Activated CD8-positive, alpha-beta memory T cell treated with anti-CD3 and anti-CD28 coated beads, Interleukin-2, amount 10 ng/mL, durations not matched to agents 7 days and 5 days (primary cell): ENCODE measurements at regions of chr1 and their contacts with region 1.

Region 1: GRCh38 chr1:66331657-66332547 is 202.1 kb upstream of the SGIP1 start:
- DNase-seq: peak; percentile 79
- ATAC-seq: peak; percentile 34
- H3K4me3 Mint-ChIP-seq: peak overlapping the region; percentile 85
- H3K27ac Mint-ChIP-seq: peak overlapping the region; percentile 96
- H3K4me1 Mint-ChIP-seq: peaks cover 53% of the 10 kb centered on the region
- H3K27me3 Mint-ChIP-seq: no peaks in the 10 kb centered on the region

Region 2: GRCh38 chr1:65799601-65800000 is 532.3 kb before region 1 on chr1:
- CTCF ChIA-PET with region 1: no interaction called
- DNase-seq: no peak
- ATAC-seq: no peak
- H3K4me3 Mint-ChIP-seq: no peak overlapping the region
- H3K27ac Mint-ChIP-seq: no peak overlapping the region
- H3K4me1 Mint-ChIP-seq: no peaks in the 10 kb centered on the region
- H3K27me3 Mint-ChIP-seq: peaks cover 75% of the 10 kb centered on the region

Region 3: DNA sequence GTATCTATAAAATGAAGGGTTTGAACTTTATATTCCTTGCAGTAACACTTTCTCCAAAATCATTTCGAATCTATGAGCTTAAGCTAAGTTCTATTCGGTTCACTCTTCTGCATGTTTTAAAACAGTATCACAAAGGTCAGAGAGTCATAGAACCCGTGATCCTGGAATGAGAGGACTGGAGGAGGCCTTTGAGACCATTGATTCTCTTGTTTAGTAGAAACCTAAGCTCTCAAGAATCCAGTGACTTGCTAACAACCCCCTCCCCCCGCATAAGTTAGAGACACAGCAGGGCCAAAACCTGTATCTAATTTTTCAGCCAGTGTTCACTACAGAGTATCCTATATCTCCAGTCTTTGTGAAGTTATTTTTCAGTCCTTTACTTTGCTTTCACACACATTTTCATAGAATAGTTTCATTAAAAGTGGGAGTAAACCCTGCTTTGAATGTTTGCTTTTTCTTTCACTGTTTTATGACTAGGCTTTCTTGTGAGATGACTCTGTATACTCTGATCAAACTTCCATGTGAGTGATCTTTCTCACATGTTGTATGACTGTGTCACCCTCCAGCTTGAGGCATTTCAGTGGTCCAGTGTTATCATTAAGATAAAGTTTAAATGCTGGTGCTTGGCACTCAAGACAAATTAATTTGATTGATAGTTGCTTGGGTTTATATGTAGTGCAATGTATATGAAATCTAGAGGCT is 73.3 kb before region 1 on chr1:
- CTCF ChIA-PET with region 1: interaction called, 15 read pairs
- DNase-seq: no peak
- ATAC-seq: peak; percentile 88
- H3K4me3 Mint-ChIP-seq: no peak overlapping the region
- H3K27ac Mint-ChIP-seq: peak overlapping the region; percentile 44
- H3K4me1 Mint-ChIP-seq: peaks cover 84% of the 10 kb centered on the region
- H3K27me3 Mint-ChIP-seq: no peaks in the 10 kb centered on the region

Region 4: DNA sequence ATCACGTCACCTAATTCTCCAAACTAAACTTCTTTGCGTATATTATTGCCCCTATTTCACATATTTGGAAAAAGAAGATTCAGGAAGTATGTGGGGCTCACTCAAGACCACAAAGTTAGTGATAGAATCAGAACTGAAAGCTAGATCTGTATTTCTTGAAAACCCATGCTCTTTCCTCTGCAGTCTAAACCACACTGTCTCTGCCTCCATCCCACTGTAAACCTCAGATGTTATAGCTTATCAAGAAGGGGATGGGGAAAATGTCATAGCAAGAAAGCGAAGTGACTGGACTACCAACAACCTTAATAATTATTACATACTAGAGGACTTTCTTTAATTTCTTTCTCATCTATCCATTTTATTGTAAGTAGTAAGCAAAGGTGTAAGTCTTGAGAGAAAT is 55.7 kb before region 1 on chr1:
- CTCF ChIA-PET with region 1: interaction called, 41 read pairs
- DNase-seq: peak; percentile 77
- ATAC-seq: peak; percentile 81
- H3K4me3 Mint-ChIP-seq: peak overlapping the region; percentile 52
- H3K27ac Mint-ChIP-seq: peak overlapping the region; percentile 79
- H3K4me1 Mint-ChIP-seq: peaks cover 93% of the 10 kb centered on the region
- H3K27me3 Mint-ChIP-seq: no peaks in the 10 kb centered on the region

Region 5: GRCh38 chr1:66282343-66282852 is 49.5 kb before region 1 on chr1:
- CTCF ChIA-PET with region 1: interaction called, 41 read pairs
- DNase-seq: peak; percentile 81
- ATAC-seq: peak; percentile 89
- H3K4me3 Mint-ChIP-seq: no peak overlapping the region
- H3K27ac Mint-ChIP-seq: peak overlapping the region; percentile 70
- H3K4me1 Mint-ChIP-seq: peaks cover 95% of the 10 kb centered on the region
- H3K27me3 Mint-ChIP-seq: no peaks in the 10 kb centered on the region

Region 6: DNA sequence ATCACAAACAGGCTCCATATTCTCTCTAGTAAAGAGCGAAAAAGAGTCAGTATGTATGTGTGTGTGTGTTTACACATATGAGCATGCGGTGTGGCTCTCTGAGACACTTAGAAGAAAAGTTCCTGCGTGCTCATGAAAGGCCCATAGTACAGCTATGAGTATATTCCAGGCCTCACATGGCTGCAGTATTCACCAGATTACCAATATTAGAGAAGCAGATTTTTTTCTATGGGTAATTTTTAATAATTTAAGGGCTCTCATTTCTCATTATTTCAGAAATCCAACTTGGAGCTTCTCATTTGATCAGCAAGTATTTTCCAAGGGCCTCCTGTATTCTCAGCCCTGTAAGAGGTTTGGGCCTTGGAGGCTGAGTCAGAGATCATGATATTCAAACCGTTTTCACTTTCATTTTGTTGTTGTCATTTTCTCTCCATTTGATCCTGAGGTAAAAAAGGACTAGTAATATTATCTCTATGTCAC is 30.9 kb before region 1 on chr1:
- CTCF ChIA-PET with region 1: interaction called, 21 read pairs
- DNase-seq: peak; percentile 73
- ATAC-seq: peak; percentile 93
- H3K4me3 Mint-ChIP-seq: peak overlapping the region; percentile 66
- H3K27ac Mint-ChIP-seq: peak overlapping the region; percentile 89
- H3K4me1 Mint-ChIP-seq: peaks cover 39% of the 10 kb centered on the region
- H3K27me3 Mint-ChIP-seq: no peaks in the 10 kb centered on the region

Region 7: GRCh38 chr1:66342707-66343106 is 10.8 kb after region 1 on chr1:
- CTCF ChIA-PET with region 1: interaction called, 23 read pairs
- DNase-seq: no peak
- ATAC-seq: peak; percentile 32
- H3K4me3 Mint-ChIP-seq: peak overlapping the region; percentile 7
- H3K27ac Mint-ChIP-seq: peak overlapping the region; percentile 80
- H3K4me1 Mint-ChIP-seq: peaks cover 79% of the 10 kb centered on the region
- H3K27me3 Mint-ChIP-seq: no peaks in the 10 kb centered on the region

Region 8: GRCh38 chr1:66350001-66350547 is 18.2 kb after region 1 on chr1:
- CTCF ChIA-PET with region 1: interaction called, 23 read pairs
- DNase-seq: peak; percentile 68
- ATAC-seq: peak; percentile 61
- H3K4me3 Mint-ChIP-seq: peak overlapping the region; percentile 76
- H3K27ac Mint-ChIP-seq: peak overlapping the region; percentile 91
- H3K4me1 Mint-ChIP-seq: peaks cover 94% of the 10 kb centered on the region
- H3K27me3 Mint-ChIP-seq: no peaks in the 10 kb centered on the region

Region 9: GRCh38 chr1:66413136-66413837 is 81.4 kb after region 1 on chr1:
- CTCF ChIA-PET with region 1: no interaction called
- DNase-seq: no peak
- ATAC-seq: no peak
- H3K4me3 Mint-ChIP-seq: no peak overlapping the region
- H3K27ac Mint-ChIP-seq: no peak overlapping the region
- H3K4me1 Mint-ChIP-seq: peaks cover 15% of the 10 kb centered on the region
- H3K27me3 Mint-ChIP-seq: no peaks in the 10 kb centered on the region